ENCODE measurements at regions of chr11 and their contacts with region 1.

Region 1: DNA sequence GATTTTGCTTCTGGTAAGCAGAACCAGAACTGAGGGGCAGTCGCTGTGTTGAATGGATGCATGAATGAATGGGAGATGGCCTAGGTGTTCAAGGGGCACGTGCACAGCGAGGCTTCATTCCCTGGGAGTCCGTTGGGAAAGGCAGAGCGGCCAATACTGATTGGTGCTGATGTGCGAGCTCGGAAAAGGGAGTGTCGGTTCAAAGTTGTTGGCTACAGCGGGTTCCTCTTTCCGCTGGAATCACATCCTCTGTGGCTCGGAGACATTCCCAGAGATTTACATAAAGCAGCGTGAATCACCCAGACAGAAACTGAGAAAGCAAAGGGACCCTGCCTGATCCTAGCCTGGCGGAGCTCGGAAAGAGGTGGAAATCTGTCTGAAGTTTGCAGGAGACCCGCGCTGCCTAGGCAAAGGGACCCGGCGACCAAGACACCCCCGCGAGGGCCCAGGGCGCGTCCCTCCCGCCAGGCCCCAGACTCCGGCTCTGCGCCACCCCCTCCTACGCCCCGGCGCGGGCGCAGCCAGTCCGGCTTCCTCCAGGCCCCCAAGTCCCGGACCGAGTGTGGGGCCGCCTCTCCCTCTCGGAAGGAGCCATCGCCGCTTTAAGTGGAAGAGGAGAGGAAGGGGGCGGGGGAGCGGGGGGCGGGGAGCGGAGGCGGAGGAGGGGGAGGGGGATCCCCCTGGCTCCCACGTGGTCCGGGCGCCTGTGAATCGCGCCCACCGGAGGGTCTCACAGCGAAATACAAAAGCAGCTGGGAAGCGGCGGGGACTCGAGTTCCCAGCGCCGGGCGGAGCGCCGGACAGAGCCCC is at the start of gene FJX1:
- DNase-seq: peak; percentile 72
- H3K4me3 ChIP-seq: peak within 1 kb of the TSS; percentile 78
- H3K27ac ChIP-seq: peak within 1 kb of the TSS; percentile 80
- H3K27me3 ChIP-seq: no peaks in the 10 kb centered on the region
- CTCF ChIP-seq: no peak
- polyA plus RNA-seq, gene FJX1: 4.8 and 5.6 TPM in 2 replicates

Region 2: DNA sequence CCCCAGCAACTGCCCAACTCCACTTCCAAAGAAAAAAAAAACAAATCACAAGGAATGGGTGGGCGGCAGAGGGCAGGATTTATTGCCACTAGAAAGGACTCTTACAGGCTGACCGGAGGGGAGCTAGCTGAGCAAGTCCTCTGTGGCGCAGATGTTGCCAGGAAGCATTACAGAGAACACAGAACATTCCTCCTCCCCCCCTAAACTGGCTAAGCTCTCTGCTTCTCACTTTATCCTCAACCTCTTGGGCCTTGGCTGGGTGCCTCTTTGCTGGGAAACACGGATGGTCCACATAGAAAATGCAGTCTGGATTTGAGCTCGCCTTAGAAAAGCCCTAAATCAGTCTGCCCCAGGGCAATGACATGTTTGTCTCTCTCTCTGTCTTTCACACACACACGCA is 12.2 kb before region 1 on chr11:
- CTCF ChIA-PET with region 1: interaction called, 20 read pairs
- POLR2A ChIA-PET with region 1: no interaction called
- DNase-seq: no peak
- H3K4me3 ChIP-seq: no peak overlapping the region
- H3K27ac ChIP-seq: no peak overlapping the region
- H3K27me3 ChIP-seq: peaks cover 10% of the 10 kb centered on the region
- CTCF ChIP-seq: no peak

Region 3: GRCh38 chr11:36258730-36259360 is 641.0 kb after region 1 on chr11:
- CTCF ChIA-PET with region 1: interaction called, 19 read pairs
- POLR2A ChIA-PET with region 1: no interaction called
- DNase-seq: peak; percentile 45
- H3K4me3 ChIP-seq: no peak overlapping the region
- H3K27ac ChIP-seq: no peak overlapping the region
- H3K27me3 ChIP-seq: peaks cover 14% of the 10 kb centered on the region
- CTCF ChIP-seq: peak; percentile 81

Region 4: GRCh38 chr11:36265793-36266628 is 648.1 kb after region 1 on chr11:
- CTCF ChIA-PET with region 1: interaction called, 22 read pairs
- POLR2A ChIA-PET with region 1: no interaction called
- DNase-seq: no peak
- H3K4me3 ChIP-seq: no peak overlapping the region
- H3K27ac ChIP-seq: no peak overlapping the region
- H3K27me3 ChIP-seq: peaks cover 8% of the 10 kb centered on the region
- CTCF ChIP-seq: peak; percentile 89

Measured in AG04450 (cell line).